ENCODE measurements at regions of chr10 and their contacts with region 1.

Region 1: GRCh38 chr10:3339531-3339950 is 167.0 kb upstream of the PITRM1 start:
- DNase-seq: no peak
- ATAC-seq: no peak
- H3K4me3 ChIP-seq: no peak overlapping the region
- H3K4me3 Mint-ChIP-seq: no peak overlapping the region
- H3K27ac ChIP-seq: no peak overlapping the region
- H3K27ac Mint-ChIP-seq: no peak overlapping the region
- H3K4me1 ChIP-seq: no peaks in the 10 kb centered on the region
- H3K4me1 Mint-ChIP-seq: no peaks in the 10 kb centered on the region
- H3K27me3 ChIP-seq: no peaks in the 10 kb centered on the region
- H3K27me3 Mint-ChIP-seq: no peaks in the 10 kb centered on the region
- CTCF ChIP-seq: no peak

Region 2: GRCh38 chr10:3701491-3701890 is 361.9 kb after region 1 on chr10:
- CTCF ChIA-PET with region 1: no interaction called
- POLR2A ChIA-PET with region 1: interaction called, 14 read pairs
- intact Hi-C with region 1: no loop called
- DNase-seq: no peak
- ATAC-seq: no peak
- H3K4me3 ChIP-seq: no peak overlapping the region
- H3K4me3 Mint-ChIP-seq: no peak overlapping the region
- H3K27ac ChIP-seq: no peak overlapping the region
- H3K27ac Mint-ChIP-seq: no peak overlapping the region
- H3K4me1 ChIP-seq: peaks cover 0 to 5% of the 10 kb centered on the region in 2 donors
- H3K4me1 Mint-ChIP-seq: peaks cover 8% of the 10 kb centered on the region
- H3K27me3 ChIP-seq: no peaks in the 10 kb centered on the region
- H3K27me3 Mint-ChIP-seq: no peaks in the 10 kb centered on the region
- CTCF ChIP-seq: no peak